ENCODE measurements at regions of chr4 and their contacts with region 1.

Region 1: GRCh38 chr4:119300101-119300978 is 21.6 kb downstream of the FABP2 start:
- DNase-seq: peak; percentile 92 to 96
- ATAC-seq: peak; percentile 96 to 98 (median 97)
- H3K4me3 ChIP-seq: peak overlapping the region; percentile 49 to 96 (median 73)
- H3K27ac ChIP-seq: peak overlapping the region; percentile 59 to 97 (median 91)
- H3K4me1 ChIP-seq: peaks cover 8 to 43% (median 26%) of the 10 kb centered on the region in 9 donors
- H3K27me3 ChIP-seq: no peaks in the 10 kb centered on the region
- CTCF ChIP-seq: peak in 1 of 9 donors; percentile 24

Region 2: GRCh38 chr4:118974758-118975157 is 325.6 kb before region 1 on chr4:
- intact Hi-C with region 1: loop called in 1 of 10 experiments (anchors 5 kb)
- DNase-seq: no peak
- ATAC-seq: peak in 2 of 8 donors; percentile 3 to 14
- H3K4me3 ChIP-seq: no peak overlapping the region
- H3K27ac ChIP-seq: peak overlapping the region in 4 of 10 donors; percentile 10 to 50 (median 27)
- H3K4me1 ChIP-seq: peaks cover 4 to 68% (median 44%) of the 10 kb centered on the region in 9 donors
- H3K27me3 ChIP-seq: no peaks in the 10 kb centered on the region
- CTCF ChIP-seq: no peak

Region 3: DNA sequence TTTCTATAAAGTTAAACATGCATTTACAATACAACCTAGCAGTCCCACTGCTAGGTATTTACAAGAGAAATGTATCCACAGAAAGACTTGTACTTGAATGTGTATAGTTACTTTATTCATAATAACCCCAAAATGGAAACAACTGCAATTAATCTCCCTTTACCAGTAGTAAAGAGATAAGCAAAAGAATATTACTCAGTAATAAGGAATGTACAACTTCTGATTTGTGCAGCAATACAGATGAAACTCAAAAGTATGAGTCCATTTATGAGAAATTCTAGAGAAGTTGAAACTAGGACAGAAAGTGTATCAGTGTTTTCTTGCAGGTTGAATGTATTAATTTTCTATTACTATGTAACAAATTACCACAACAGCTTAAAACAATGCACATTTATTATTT is 72.7 kb before region 1 on chr4:
- intact Hi-C with region 1: no loop called
- DNase-seq: no peak
- ATAC-seq: no peak
- H3K4me3 ChIP-seq: no peak overlapping the region
- H3K27ac ChIP-seq: peak overlapping the region in 1 of 10 donors; percentile 11
- H3K4me1 ChIP-seq: peaks cover 0 to 25% (median 6%) of the 10 kb centered on the region in 9 donors
- H3K27me3 ChIP-seq: no peaks in the 10 kb centered on the region
- CTCF ChIP-seq: no peak